ENCODE measurements at regions of chr1 and their contacts with region 1.

Region 1: GRCh38 chr1:172357753-172358385 is 62.6 kb upstream of the C1orf105 start:
- DNase-seq: no peak
- ATAC-seq: peak; percentile 20
- H3K4me3 ChIP-seq: peak overlapping the region in 1 of 5 experiments; percentile 17
- H3K4me3 Mint-ChIP-seq: peak overlapping the region; percentile 36
- H3K27ac ChIP-seq: peak overlapping the region; percentile 67 to 81
- H3K27ac Mint-ChIP-seq: peak overlapping the region; percentile 83
- H3K4me1 ChIP-seq: peaks cover 43 to 54% of the 10 kb centered on the region in 2 donors
- H3K4me1 Mint-ChIP-seq: peaks cover 56% of the 10 kb centered on the region
- H3K27me3 ChIP-seq: no peaks in the 10 kb centered on the region
- H3K27me3 Mint-ChIP-seq: no peaks in the 10 kb centered on the region
- CTCF ChIP-seq: no peak

Region 2: DNA sequence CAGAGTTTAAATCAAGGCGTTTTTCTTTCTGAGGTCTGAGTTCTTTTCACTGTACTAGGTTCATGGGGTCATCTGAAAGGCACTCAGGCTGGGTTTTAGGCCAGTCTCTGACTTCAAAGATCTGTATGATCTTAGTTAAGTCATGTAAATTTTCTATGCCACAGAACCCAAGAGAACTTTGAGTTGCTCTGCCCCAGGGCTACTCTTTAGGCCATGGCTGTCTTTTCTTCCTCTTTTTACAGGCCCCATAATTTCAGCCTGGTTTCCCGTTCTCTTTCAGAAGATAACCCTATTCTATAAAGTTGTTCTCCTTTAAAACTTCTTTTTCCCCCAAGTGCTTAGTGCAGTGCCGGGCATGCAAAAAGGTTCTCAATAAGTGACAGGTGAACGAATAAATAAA is 550.3 kb before region 1 on chr1:
- CTCF ChIA-PET with region 1: no interaction called
- POLR2A ChIA-PET with region 1: no interaction called
- intact Hi-C with region 1: no loop called
- DNase-seq: no peak
- ATAC-seq: no peak
- H3K4me3 ChIP-seq: no peak overlapping the region
- H3K4me3 Mint-ChIP-seq: no peak overlapping the region
- H3K27ac ChIP-seq: peak overlapping the region in 1 of 2 donors; percentile 34
- H3K27ac Mint-ChIP-seq: peak overlapping the region; percentile 32
- H3K4me1 ChIP-seq: peaks cover 10 to 19% of the 10 kb centered on the region in 2 donors
- H3K4me1 Mint-ChIP-seq: peaks cover 23% of the 10 kb centered on the region
- H3K27me3 ChIP-seq: no peaks in the 10 kb centered on the region
- H3K27me3 Mint-ChIP-seq: no peaks in the 10 kb centered on the region
- CTCF ChIP-seq: no peak

Region 3: DNA sequence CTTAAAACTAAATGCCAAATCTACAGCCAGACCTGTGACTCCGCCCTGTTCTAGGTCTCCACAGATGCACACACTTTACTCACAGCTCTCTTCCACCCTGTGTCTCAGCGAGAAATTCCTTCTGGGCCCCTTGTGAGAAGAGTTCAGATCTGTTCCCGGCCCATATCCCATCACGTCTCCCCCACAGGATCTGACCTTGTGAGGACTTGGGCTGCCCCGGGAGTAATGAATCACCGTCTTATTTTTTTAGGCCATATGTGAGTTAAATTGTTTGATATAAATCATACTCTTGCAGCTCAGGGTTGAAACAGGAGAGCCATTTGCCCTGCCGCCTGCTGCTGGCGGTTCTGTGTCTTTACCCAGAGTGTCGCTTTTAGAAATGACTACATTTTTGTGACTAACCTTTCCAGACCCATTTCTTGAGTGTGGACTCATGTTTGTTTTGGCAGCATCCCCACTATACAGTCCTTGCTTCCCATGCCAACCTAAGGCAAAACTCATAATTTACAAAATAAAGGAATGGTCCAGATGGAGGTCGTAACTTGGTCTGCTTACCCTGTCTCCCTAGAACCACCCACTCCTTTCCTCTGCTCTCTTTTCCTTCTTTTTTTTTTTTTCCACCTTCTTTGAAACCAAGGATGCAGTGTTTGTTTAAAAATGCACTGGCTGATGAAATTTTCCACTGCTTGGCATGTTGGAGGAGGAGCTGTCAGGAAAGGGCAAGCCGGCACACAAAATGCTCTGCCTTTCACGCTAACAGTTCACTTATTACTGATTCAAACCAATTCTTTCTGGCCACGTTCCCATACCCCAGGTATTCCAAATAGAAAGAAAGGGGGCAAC is 35.4 kb before region 1 on chr1:
- CTCF ChIA-PET with region 1: no interaction called
- POLR2A ChIA-PET with region 1: no interaction called
- intact Hi-C with region 1: no loop called
- DNase-seq: no peak
- ATAC-seq: no peak
- H3K4me3 ChIP-seq: no peak overlapping the region
- H3K4me3 Mint-ChIP-seq: no peak overlapping the region
- H3K27ac ChIP-seq: no peak overlapping the region
- H3K27ac Mint-ChIP-seq: no peak overlapping the region
- H3K4me1 ChIP-seq: no peaks in the 10 kb centered on the region
- H3K4me1 Mint-ChIP-seq: no peaks in the 10 kb centered on the region
- H3K27me3 ChIP-seq: no peaks in the 10 kb centered on the region
- H3K27me3 Mint-ChIP-seq: no peaks in the 10 kb centered on the region
- CTCF ChIP-seq: no peak

Region 4: DNA sequence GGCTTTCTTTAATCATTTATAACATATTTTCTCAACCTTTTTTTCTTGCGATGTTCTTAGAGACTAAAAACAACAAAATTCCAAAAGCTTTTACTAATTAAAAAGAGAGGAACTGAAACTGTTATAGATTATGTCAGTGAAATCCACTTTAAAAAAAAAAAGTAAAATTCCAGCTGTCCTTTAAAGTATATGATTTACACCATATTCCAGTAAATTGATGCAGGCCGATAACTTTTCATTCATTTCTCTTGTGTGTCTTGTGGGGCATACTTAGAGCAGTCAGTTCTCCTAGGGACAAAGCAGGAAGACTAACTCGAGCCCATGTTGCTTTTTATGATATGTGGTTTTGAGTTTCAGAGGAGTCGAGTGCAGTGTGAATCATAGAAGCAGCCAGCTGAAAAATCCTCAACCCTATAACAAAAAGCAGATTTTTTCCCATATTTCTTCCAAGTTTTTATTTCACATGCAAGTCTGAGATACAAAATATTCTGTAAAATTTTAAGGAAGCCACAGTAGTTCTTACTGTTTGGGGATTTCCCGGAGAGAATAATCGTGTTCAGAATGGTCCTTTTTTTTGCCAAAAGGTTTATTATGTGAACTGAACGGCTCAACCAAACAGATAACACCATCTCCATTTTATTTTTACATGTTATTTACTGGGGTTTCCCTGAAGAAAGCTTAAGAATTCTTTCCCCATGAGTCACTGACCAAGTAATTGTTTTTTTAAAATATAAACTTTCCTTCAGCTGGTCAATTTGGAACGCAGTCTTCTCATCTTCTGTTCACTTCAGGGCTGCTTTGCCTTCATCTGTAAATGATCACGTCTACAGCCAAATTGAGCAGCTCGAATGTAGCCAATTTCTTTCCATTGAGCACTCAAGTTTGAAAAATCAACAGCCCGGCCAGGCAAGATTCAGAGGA is 14.4 kb before region 1 on chr1:
- CTCF ChIA-PET with region 1: interaction called, 5 read pairs
- POLR2A ChIA-PET with region 1: interaction called, 3 read pairs
- intact Hi-C with region 1: loop called (anchors 2 kb)
- DNase-seq: peak; percentile 45
- ATAC-seq: peak; percentile 51
- H3K4me3 ChIP-seq: peak overlapping the region in 2 of 5 experiments; percentile 6 to 27
- H3K4me3 Mint-ChIP-seq: peak overlapping the region; percentile 71
- H3K27ac ChIP-seq: peak overlapping the region; percentile 42 to 48
- H3K27ac Mint-ChIP-seq: peak overlapping the region; percentile 79
- H3K4me1 ChIP-seq: peaks cover 34 to 45% of the 10 kb centered on the region in 2 donors
- H3K4me1 Mint-ChIP-seq: peaks cover 60% of the 10 kb centered on the region
- H3K27me3 ChIP-seq: no peaks in the 10 kb centered on the region
- H3K27me3 Mint-ChIP-seq: no peaks in the 10 kb centered on the region
- CTCF ChIP-seq: no peak

Region 5: GRCh38 chr1:172373864-172374263 is 16.0 kb after region 1 on chr1:
- CTCF ChIA-PET with region 1: interaction called, 6 read pairs
- POLR2A ChIA-PET with region 1: interaction called, 9 read pairs
- intact Hi-C with region 1: loop called (anchors 1 kb)
- DNase-seq: no peak
- ATAC-seq: no peak
- H3K4me3 ChIP-seq: no peak overlapping the region
- H3K4me3 Mint-ChIP-seq: no peak overlapping the region
- H3K27ac ChIP-seq: peak overlapping the region in 1 of 2 donors; percentile 3
- H3K27ac Mint-ChIP-seq: peak overlapping the region; percentile 38
- H3K4me1 ChIP-seq: peaks cover 2 to 12% of the 10 kb centered on the region in 2 donors
- H3K4me1 Mint-ChIP-seq: peaks cover 24% of the 10 kb centered on the region
- H3K27me3 ChIP-seq: no peaks in the 10 kb centered on the region
- H3K27me3 Mint-ChIP-seq: no peaks in the 10 kb centered on the region
- CTCF ChIP-seq: no peak

Region 6: DNA sequence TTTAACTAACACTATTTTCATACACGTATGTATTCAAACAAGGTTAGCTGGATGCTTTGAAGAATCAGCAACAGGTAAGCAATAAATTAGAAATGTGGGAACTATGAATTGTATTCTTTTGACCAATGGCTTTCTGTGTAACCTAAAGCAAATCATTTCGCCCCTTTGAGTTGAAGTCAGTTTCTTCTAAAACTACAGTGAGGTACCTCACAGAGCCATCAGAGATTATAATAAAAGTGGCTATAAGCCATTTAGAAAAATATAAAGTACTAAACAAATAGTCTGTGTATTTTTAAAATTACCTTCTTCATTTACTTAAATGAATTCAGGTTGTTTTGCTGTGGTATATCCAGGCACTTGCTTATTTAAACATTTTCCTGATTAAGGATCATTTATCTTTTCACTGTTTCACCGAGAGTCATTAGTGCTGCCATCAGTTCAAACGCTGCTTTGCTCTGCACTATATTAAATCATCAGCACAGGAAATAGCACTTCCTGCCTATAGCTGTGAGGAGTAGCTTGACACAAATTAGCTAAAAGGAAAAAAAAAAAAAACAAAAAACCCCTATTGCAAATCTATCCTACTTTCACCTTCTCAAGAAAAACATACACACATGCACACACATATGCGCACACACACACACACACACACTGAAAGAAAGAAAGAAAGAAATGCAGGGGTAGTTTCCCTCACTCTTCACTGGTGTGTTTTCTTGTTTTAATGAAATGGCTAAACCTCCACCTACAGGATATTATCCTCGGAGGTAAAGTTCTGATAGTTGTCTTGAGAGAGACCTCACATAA is 22.8 kb after region 1 on chr1:
- CTCF ChIA-PET with region 1: interaction called, 11 read pairs
- POLR2A ChIA-PET with region 1: interaction called, 10 read pairs
- intact Hi-C with region 1: loop called (anchors 1 kb)
- DNase-seq: peak; percentile 76
- ATAC-seq: peak; percentile 90
- H3K4me3 ChIP-seq: peak overlapping the region in 3 of 5 experiments; percentile 27 to 49 (median 33)
- H3K4me3 Mint-ChIP-seq: peak overlapping the region; percentile 73
- H3K27ac ChIP-seq: peak overlapping the region; percentile 76 to 89
- H3K27ac Mint-ChIP-seq: peak overlapping the region; percentile 90
- H3K4me1 ChIP-seq: peaks cover 26 to 37% of the 10 kb centered on the region in 2 donors
- H3K4me1 Mint-ChIP-seq: peaks cover 44% of the 10 kb centered on the region
- H3K27me3 ChIP-seq: no peaks in the 10 kb centered on the region
- H3K27me3 Mint-ChIP-seq: no peaks in the 10 kb centered on the region
- CTCF ChIP-seq: no peak

Region 7: GRCh38 chr1:172497230-172497629 is 139.4 kb after region 1 on chr1:
- CTCF ChIA-PET with region 1: no interaction called
- POLR2A ChIA-PET with region 1: no interaction called
- intact Hi-C with region 1: no loop called
- DNase-seq: no peak
- ATAC-seq: no peak
- H3K4me3 ChIP-seq: no peak overlapping the region
- H3K4me3 Mint-ChIP-seq: no peak overlapping the region
- H3K27ac ChIP-seq: no peak overlapping the region
- H3K27ac Mint-ChIP-seq: no peak overlapping the region
- H3K4me1 ChIP-seq: no peaks in the 10 kb centered on the region
- H3K4me1 Mint-ChIP-seq: no peaks in the 10 kb centered on the region
- H3K27me3 ChIP-seq: no peaks in the 10 kb centered on the region
- H3K27me3 Mint-ChIP-seq: peaks cover 3% of the 10 kb centered on the region
- CTCF ChIP-seq: no peak

Measured in B cell (primary cell).